ENCODE measurements at regions of chr2 and their contacts with region 1.

Region 1: GRCh38 chr2:85999061-85999831 is 106.4 kb downstream of the POLR1A start:
- H3K4me3 Mint-ChIP-seq: peak overlapping the region; percentile 64
- H3K27ac Mint-ChIP-seq: peak overlapping the region; percentile 85
- H3K4me1 Mint-ChIP-seq: peaks cover 79% of the 10 kb centered on the region
- H3K27me3 Mint-ChIP-seq: no peaks in the 10 kb centered on the region

Region 2: DNA sequence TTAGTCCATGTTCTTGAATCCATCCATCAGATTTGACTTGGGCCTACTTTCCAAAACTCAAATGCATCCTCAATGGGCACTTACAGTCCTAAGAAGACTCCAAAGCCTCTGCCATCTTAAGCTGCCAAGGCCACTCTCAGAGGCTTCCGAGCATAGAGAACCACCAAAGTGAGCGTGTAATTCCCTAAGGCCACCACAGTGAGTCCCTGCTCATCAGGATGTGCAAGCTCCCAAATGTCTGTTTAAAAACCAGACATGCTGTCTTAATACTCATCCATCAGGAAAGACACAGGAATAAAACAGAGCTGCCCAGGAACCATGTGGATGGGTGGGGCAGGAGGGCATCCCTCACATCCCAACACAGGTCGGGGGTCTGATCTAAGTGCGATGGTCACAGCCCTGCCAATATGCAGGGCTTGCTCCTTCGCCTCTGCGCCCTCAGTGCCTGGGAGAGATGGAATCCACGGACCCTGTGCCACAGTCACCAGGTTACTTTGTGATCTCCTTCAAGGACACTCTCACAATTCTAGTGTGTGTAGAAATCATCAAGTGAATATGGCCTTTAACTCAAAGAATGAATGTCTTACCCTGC is 26.1 kb after region 1 on chr2:
- intact Hi-C with region 1: loop called (anchors 5 kb)
- H3K4me3 Mint-ChIP-seq: no peak overlapping the region
- H3K27ac Mint-ChIP-seq: peak overlapping the region; percentile 58
- H3K4me1 Mint-ChIP-seq: peaks cover 49% of the 10 kb centered on the region
- H3K27me3 Mint-ChIP-seq: no peaks in the 10 kb centered on the region

Region 3: GRCh38 chr2:86035883-86036668 is 36.8 kb after region 1 on chr2:
- intact Hi-C with region 1: loop called (anchors 2 kb)
- H3K4me3 Mint-ChIP-seq: peak overlapping the region; percentile 60
- H3K27ac Mint-ChIP-seq: peak overlapping the region; percentile 94
- H3K4me1 Mint-ChIP-seq: peaks cover 71% of the 10 kb centered on the region
- H3K27me3 Mint-ChIP-seq: no peaks in the 10 kb centered on the region

Region 4: GRCh38 chr2:86072271-86072858 is 73.1 kb after region 1 on chr2:
- intact Hi-C with region 1: no loop called
- H3K4me3 Mint-ChIP-seq: no peak overlapping the region
- H3K27ac Mint-ChIP-seq: peak overlapping the region; percentile 70
- H3K4me1 Mint-ChIP-seq: peaks cover 18% of the 10 kb centered on the region
- H3K27me3 Mint-ChIP-seq: no peaks in the 10 kb centered on the region

Region 5: GRCh38 chr2:86160156-86160952 is 161.1 kb after region 1 on chr2:
- intact Hi-C with region 1: no loop called
- H3K4me3 Mint-ChIP-seq: no peak overlapping the region
- H3K27ac Mint-ChIP-seq: no peak overlapping the region
- H3K4me1 Mint-ChIP-seq: no peaks in the 10 kb centered on the region
- H3K27me3 Mint-ChIP-seq: no peaks in the 10 kb centered on the region

Region 6: GRCh38 chr2:86314125-86314524 is 314.9 kb after region 1 on chr2:
- intact Hi-C with region 1: no loop called
- H3K4me3 Mint-ChIP-seq: no peak overlapping the region
- H3K27ac Mint-ChIP-seq: no peak overlapping the region
- H3K4me1 Mint-ChIP-seq: no peaks in the 10 kb centered on the region
- H3K27me3 Mint-ChIP-seq: peaks cover 10% of the 10 kb centered on the region